CD8-positive, alpha-beta T cell (primary cell): ENCODE measurements at regions of chr4 and their contacts with region 1.

Region 1: GRCh38 chr4:100093091-100093866 is 97.0 kb downstream of the DDIT4L start:
- DNase-seq: peak; percentile 68 to 97 (median 86)
- ATAC-seq: peak; percentile 99
- H3K4me3 ChIP-seq: no peak overlapping the region
- H3K4me3 Mint-ChIP-seq: no peak overlapping the region
- H3K27ac ChIP-seq: peak overlapping the region in 1 of 2 experiments; percentile 59
- H3K27ac Mint-ChIP-seq: peak overlapping the region; percentile 91
- H3K4me1 ChIP-seq: peaks cover 7% of the 10 kb centered on the region
- H3K4me1 Mint-ChIP-seq: peaks cover 18% of the 10 kb centered on the region
- H3K27me3 ChIP-seq: no peaks in the 10 kb centered on the region
- H3K27me3 Mint-ChIP-seq: no peaks in the 10 kb centered on the region
- CTCF ChIP-seq: peak; percentile 71

Region 2: GRCh38 chr4:98864560-98864959 is 1228.7 kb before region 1 on chr4:
- CTCF ChIA-PET with region 1: no interaction called
- POLR2A ChIA-PET with region 1: no interaction called
- intact Hi-C with region 1: no loop called
- DNase-seq: no peak
- ATAC-seq: no peak
- H3K4me3 ChIP-seq: no peak overlapping the region
- H3K4me3 Mint-ChIP-seq: no peak overlapping the region
- H3K27ac ChIP-seq: no peak overlapping the region
- H3K27ac Mint-ChIP-seq: no peak overlapping the region
- H3K4me1 ChIP-seq: no peaks in the 10 kb centered on the region
- H3K4me1 Mint-ChIP-seq: no peaks in the 10 kb centered on the region
- H3K27me3 ChIP-seq: no peaks in the 10 kb centered on the region
- H3K27me3 Mint-ChIP-seq: no peaks in the 10 kb centered on the region
- CTCF ChIP-seq: no peak

Region 3: DNA sequence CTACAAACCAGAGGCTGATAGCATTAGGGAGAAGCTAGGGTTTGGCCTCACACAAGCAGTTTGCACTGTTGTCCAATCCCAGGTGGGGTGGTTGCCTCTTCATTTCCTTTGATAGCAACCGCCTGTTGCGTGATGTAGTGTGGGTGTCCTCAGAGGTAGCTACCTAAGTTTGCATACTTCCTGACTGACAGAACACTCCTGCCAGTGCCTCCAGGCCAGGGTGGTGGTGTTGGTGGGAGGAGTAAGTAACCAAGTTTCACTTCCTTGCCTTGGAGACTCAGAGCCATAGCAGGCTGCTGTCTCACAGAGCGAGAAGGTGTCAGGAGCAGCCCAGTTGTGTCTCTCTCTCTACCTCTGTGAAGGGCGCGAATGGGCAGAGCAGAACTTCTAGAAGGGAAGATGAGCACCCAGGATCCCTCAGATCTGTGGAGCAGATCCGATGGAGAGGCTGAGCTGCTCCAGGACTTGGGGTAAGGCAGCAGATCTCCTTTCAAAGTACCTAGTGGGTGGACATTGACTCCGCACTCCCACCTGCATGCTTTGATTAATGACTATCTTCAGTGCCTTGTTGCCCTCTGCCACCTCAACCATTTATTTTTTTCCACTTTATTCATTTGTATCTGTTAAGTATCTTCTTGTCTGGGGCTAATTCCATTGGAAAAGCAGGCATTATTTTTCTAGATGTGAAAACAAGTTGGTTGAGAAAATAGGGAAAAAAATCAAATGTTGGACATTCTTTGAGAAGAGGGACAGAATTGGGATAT is 276.6 kb before region 1 on chr4 and contains the start of gene DAPP1:
- CTCF ChIA-PET with region 1: interaction called, 3 read pairs
- POLR2A ChIA-PET with region 1: no interaction called
- intact Hi-C with region 1: loop called in 1 of 2 experiments (anchors 10 kb)
- DNase-seq: peak; percentile 48 to 91 (median 70)
- ATAC-seq: peak; percentile 97
- H3K4me3 ChIP-seq: peak within 1 kb of the TSS; percentile 36 to 49
- H3K4me3 Mint-ChIP-seq: peak within 1 kb of the TSS; percentile 85
- H3K27ac ChIP-seq: peak within 1 kb of the TSS; percentile 22 to 53
- H3K27ac Mint-ChIP-seq: peak within 1 kb of the TSS; percentile 89
- H3K4me1 ChIP-seq: peaks cover 38% of the 10 kb centered on the region
- H3K4me1 Mint-ChIP-seq: peaks cover 56% of the 10 kb centered on the region
- H3K27me3 ChIP-seq: no peaks in the 10 kb centered on the region
- H3K27me3 Mint-ChIP-seq: no peaks in the 10 kb centered on the region
- CTCF ChIP-seq: no peak
- total RNA-seq, gene DAPP1: 3.2 to 3.6 TPM

Region 4: DNA sequence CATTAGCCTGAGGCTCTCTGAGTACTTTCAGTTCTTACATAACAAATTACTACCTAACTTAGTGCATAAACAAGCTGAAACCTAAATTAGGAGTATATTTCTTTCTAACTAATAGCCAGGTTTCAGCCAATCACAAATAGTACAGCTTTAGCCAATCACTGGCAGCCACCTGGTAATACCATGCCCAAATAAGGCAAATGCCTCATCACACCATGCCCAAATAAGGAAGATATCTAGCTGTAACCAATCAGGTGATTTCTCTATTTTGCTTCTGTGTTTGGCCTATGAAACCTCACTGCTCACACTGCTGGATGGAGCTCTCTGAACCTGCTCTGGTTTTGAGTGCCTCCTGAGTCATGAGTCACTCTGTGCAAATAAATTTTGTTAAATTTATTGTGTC is 16.5 kb before region 1 on chr4:
- CTCF ChIA-PET with region 1: interaction called, 27 read pairs
- POLR2A ChIA-PET with region 1: interaction called, 3 read pairs
- intact Hi-C with region 1: no loop called
- DNase-seq: no peak
- ATAC-seq: peak; percentile 23
- H3K4me3 ChIP-seq: no peak overlapping the region
- H3K4me3 Mint-ChIP-seq: no peak overlapping the region
- H3K27ac ChIP-seq: no peak overlapping the region
- H3K27ac Mint-ChIP-seq: no peak overlapping the region
- H3K4me1 ChIP-seq: no peaks in the 10 kb centered on the region
- H3K4me1 Mint-ChIP-seq: peaks cover 4% of the 10 kb centered on the region
- H3K27me3 ChIP-seq: no peaks in the 10 kb centered on the region
- H3K27me3 Mint-ChIP-seq: no peaks in the 10 kb centered on the region
- CTCF ChIP-seq: no peak

Region 5: DNA sequence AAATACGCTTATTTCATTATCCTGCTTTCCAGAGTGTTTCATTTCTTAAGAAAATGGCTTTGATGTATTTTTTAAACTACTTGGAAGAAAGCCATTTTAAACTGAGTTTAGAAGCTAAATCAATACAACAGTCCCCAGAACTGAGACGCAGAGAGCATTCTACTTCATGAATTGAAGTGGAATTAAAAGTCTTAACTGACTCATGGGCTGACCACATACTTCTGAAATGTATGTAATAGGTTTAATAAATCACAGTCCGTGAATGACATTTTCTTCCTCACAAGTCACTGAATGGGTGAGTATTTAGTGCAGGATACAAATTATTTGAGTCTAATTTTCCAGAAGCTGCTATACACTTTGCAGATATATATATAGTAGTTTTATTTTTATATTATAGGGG is 368.9 kb after region 1 on chr4:
- CTCF ChIA-PET with region 1: no interaction called
- POLR2A ChIA-PET with region 1: no interaction called
- intact Hi-C with region 1: loop called in 1 of 2 experiments (anchors 5 kb)
- DNase-seq: no peak
- ATAC-seq: no peak
- H3K4me3 ChIP-seq: no peak overlapping the region
- H3K4me3 Mint-ChIP-seq: no peak overlapping the region
- H3K27ac ChIP-seq: no peak overlapping the region
- H3K27ac Mint-ChIP-seq: no peak overlapping the region
- H3K4me1 ChIP-seq: peaks cover 14% of the 10 kb centered on the region
- H3K4me1 Mint-ChIP-seq: peaks cover 17% of the 10 kb centered on the region
- H3K27me3 ChIP-seq: no peaks in the 10 kb centered on the region
- H3K27me3 Mint-ChIP-seq: no peaks in the 10 kb centered on the region
- CTCF ChIP-seq: no peak

Region 6: DNA sequence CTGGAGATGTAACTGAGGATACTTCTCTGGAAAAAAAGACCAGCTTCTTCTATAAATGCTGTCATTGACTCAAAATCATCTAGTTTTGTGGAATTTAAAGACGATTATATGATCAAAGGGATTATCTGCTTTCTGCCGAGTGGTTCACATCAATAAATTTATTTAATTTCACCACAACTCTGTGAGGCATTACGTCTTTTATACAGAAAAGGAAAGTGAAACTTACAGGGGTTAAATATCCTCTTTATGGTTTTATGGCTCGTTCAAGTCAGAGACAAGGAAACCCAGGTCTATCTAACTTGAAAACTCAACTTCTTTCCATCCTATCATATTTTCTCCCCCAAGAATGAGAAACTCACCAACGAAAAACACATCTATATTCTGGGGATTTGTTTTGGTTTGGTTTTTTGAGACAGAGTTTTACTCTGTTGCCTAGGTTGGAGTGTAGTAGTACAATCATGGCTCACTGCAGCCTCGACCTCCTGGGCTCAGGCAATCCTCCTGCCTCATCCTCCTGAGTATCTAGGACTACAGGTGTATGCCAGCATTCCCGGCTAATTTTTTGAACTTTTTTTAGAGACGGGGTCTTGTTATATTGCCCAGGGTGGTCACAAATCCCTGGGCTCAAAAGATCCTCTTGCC is 802.4 kb after region 1 on chr4:
- CTCF ChIA-PET with region 1: no interaction called
- POLR2A ChIA-PET with region 1: no interaction called
- intact Hi-C with region 1: loop called in 1 of 2 experiments (anchors 10 kb)
- DNase-seq: peak in 2 of 9 experiments; percentile 30 to 53
- ATAC-seq: peak; percentile 70
- H3K4me3 ChIP-seq: peak overlapping the region; percentile 44 to 65
- H3K4me3 Mint-ChIP-seq: peak overlapping the region; percentile 76
- H3K27ac ChIP-seq: peak overlapping the region in 1 of 2 experiments; percentile 22
- H3K27ac Mint-ChIP-seq: peak overlapping the region; percentile 64
- H3K4me1 ChIP-seq: peaks cover 6% of the 10 kb centered on the region
- H3K4me1 Mint-ChIP-seq: peaks cover 16% of the 10 kb centered on the region
- H3K27me3 ChIP-seq: no peaks in the 10 kb centered on the region
- H3K27me3 Mint-ChIP-seq: no peaks in the 10 kb centered on the region
- CTCF ChIP-seq: no peak

Region 7: GRCh38 chr4:101169044-101170014 is 1076.0 kb after region 1 on chr4:
- CTCF ChIA-PET with region 1: interaction called, 4 read pairs
- POLR2A ChIA-PET with region 1: no interaction called
- intact Hi-C with region 1: loop called (anchors 1 to 10 kb)
- DNase-seq: peak; percentile 6 to 81 (median 56)
- ATAC-seq: peak; percentile 92
- H3K4me3 ChIP-seq: no peak overlapping the region
- H3K4me3 Mint-ChIP-seq: no peak overlapping the region
- H3K27ac ChIP-seq: no peak overlapping the region
- H3K27ac Mint-ChIP-seq: no peak overlapping the region
- H3K4me1 ChIP-seq: no peaks in the 10 kb centered on the region
- H3K4me1 Mint-ChIP-seq: peaks cover 2% of the 10 kb centered on the region
- H3K27me3 ChIP-seq: no peaks in the 10 kb centered on the region
- H3K27me3 Mint-ChIP-seq: no peaks in the 10 kb centered on the region
- CTCF ChIP-seq: peak; percentile 66

Region 8: DNA sequence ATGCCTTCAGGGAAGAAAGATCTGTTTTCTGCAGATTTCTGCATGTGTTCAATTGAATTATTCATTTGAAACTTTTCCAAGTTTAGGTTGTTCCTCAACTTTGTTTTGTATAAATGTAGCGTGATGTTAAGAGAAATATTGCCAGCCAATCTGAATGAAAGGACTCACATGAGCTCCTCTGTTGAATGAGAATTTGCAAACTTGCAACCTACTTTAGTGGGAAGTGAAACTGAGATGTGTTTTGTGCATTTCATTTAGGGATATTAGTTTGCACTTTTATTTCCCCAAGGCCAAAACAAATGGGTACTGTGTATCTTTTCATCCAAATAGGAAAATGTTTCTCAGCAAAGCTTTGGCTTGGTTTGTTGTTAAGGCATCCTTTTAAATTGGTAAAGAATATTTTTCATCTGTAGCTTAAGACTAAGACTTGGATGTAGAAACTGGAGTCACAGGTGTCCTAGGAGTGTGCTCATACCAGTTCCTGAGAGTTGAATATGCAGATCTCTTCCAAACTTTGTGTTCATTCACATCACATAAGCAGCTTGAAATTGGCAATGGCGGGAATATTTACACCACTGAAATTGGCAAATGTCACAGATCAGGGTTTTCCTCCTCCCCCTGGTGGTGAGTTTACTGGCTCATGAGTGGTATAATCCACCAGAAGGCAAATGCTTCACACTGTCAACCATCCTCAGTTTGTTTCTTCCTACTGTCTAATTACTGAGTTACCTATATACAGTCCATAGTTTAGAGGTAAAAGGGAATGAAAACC is 1503.7 kb after region 1 on chr4:
- CTCF ChIA-PET with region 1: interaction called, 5 read pairs
- POLR2A ChIA-PET with region 1: no interaction called
- intact Hi-C with region 1: loop called (anchors 1 to 5 kb)
- DNase-seq: peak in 6 of 9 experiments; percentile 7 to 64 (median 43)
- ATAC-seq: peak; percentile 54
- H3K4me3 ChIP-seq: no peak overlapping the region
- H3K4me3 Mint-ChIP-seq: no peak overlapping the region
- H3K27ac ChIP-seq: no peak overlapping the region
- H3K27ac Mint-ChIP-seq: no peak overlapping the region
- H3K4me1 ChIP-seq: no peaks in the 10 kb centered on the region
- H3K4me1 Mint-ChIP-seq: no peaks in the 10 kb centered on the region
- H3K27me3 ChIP-seq: no peaks in the 10 kb centered on the region
- H3K27me3 Mint-ChIP-seq: no peaks in the 10 kb centered on the region
- CTCF ChIP-seq: peak; percentile 49